ENCODE measurements at regions of chr17 and their contacts with region 1.

Region 1: DNA sequence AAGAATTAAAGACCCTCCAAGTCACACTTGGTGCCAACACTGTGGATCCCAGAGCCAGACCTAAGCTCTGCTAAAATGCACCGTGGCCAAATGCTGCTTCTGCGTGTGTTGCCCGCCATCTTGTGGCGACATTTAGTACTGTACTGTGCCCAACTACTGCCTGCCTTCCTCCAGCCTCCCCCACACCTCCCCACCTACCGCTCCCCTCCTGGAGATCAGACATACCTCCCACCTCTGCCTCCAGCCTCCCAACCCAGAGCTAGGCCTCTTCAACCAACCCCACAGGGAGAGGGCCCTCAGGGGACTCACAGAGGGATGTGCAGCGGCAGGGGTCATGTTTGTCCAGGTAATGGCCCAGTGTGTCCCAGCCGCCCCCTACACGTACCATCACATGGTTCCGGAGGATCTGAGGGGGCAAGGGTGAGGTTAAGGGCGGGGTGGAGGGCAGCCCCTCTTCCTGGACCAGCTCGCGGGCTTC is 5.5 kb downstream of the GAS2L2 start:
- DNase-seq: peak in 1 of 2 experiments; percentile 92
- H3K4me3 ChIP-seq: no peak overlapping the region
- H3K27ac ChIP-seq: no peak overlapping the region
- H3K4me1 ChIP-seq: peaks cover 0 to 11% (median 4%) of the 10 kb centered on the region in 4 experiments; a peak in 4 of 7 replicates
- H3K27me3 ChIP-seq: peaks cover 2 to 19% (median 15%) of the 10 kb centered on the region in 4 experiments
- CTCF ChIP-seq: peak; percentile 90 to 98 (median 95)
- EP300 ChIP-seq: no peak
- POLR2A ChIP-seq: no peak
- RAD21 ChIP-seq: peak; percentile 95 to 98

Region 2: GRCh38 chr17:35607239-35607847 is 140.2 kb before region 1 on chr17:
- CTCF ChIA-PET with region 1: interaction called, 166 read pairs
- POLR2A ChIA-PET with region 1: interaction called, 5 read pairs
- DNase-seq: no peak
- H3K4me3 ChIP-seq: no peak overlapping the region
- H3K27ac ChIP-seq: no peak overlapping the region
- H3K4me1 ChIP-seq: no peaks in the 10 kb centered on the region
- H3K27me3 ChIP-seq: no peaks in the 10 kb centered on the region
- CTCF ChIP-seq: no peak
- EP300 ChIP-seq: no peak
- POLR2A ChIP-seq: no peak
- RAD21 ChIP-seq: no peak

Region 3: DNA sequence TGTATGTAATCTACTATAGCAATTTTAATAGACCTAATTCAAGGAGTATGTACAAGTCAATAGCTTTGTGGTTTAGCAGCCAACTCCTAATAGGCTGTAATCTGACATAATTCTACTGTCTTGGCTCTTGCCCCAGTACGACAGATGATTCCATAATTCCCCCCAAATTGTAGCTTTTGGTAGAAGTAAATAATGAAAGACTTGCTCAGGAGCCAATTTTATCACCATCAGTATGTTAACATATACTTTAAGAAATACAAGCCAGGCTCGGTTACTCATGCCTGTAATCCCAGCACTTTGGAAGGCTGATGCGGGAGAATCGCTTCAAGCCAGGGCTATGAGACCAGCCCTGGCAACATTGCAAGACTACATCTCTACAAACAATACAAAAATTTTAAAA is 106.5 kb before region 1 on chr17:
- CTCF ChIA-PET with region 1: interaction called, 19 read pairs
- POLR2A ChIA-PET with region 1: no interaction called
- DNase-seq: no peak
- H3K4me3 ChIP-seq: no peak overlapping the region
- H3K27ac ChIP-seq: no peak overlapping the region
- H3K4me1 ChIP-seq: no peaks in the 10 kb centered on the region
- H3K27me3 ChIP-seq: no peaks in the 10 kb centered on the region
- CTCF ChIP-seq: no peak
- EP300 ChIP-seq: no peak
- POLR2A ChIP-seq: no peak
- RAD21 ChIP-seq: no peak

Region 4: GRCh38 chr17:35695613-35696012 is 52.0 kb before region 1 on chr17:
- CTCF ChIA-PET with region 1: interaction called, 10 read pairs
- POLR2A ChIA-PET with region 1: no interaction called
- DNase-seq: no peak
- H3K4me3 ChIP-seq: no peak overlapping the region
- H3K27ac ChIP-seq: no peak overlapping the region
- H3K4me1 ChIP-seq: no peaks in the 10 kb centered on the region
- H3K27me3 ChIP-seq: no peaks in the 10 kb centered on the region
- CTCF ChIP-seq: no peak
- EP300 ChIP-seq: no peak
- POLR2A ChIP-seq: no peak
- RAD21 ChIP-seq: no peak

Region 5: DNA sequence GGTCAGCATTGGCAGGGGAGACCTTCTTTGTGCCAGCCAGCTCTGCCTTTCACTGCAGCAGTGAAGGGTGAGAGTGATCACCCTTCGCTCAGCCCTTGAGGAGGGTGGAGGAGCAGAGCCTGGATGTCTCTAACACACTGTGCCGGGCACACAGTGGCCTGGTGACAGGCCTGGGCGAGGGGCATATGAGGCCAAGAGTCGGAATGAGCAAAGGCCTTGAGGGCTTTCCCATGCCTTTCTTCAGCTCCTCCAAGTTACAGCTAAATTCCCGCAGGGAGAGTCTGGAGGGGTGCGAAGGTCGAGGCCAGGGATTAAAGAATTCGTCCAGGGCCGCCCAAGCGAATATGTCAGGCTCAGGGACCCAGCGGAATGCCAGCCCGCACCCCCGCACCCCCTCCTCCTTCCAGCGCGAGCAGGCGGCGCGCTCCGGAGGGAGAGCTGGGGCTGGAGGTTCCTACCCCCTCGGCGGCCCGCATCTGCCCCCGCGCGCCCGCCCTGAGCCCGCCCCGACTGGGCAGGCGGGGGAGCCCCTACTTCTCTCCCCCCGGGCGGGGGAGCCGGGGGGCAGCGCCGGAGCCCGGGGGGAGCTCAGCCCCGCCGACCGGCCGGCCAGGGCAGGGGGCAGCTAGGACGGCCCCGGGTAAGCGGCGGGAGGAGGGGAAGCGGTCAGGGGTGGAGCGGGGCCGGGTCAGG is 16.2 kb before region 1 on chr17 and contains the start of gene RASL10B:
- CTCF ChIA-PET with region 1: interaction called, 28 read pairs
- POLR2A ChIA-PET with region 1: interaction called, 6 read pairs
- DNase-seq: peak in 1 of 2 experiments; percentile 85
- H3K4me3 ChIP-seq: peak within 1 kb of the TSS; percentile 67 to 85 (median 78)
- H3K27ac ChIP-seq: no peak within 1 kb of the TSS
- H3K4me1 ChIP-seq: peaks cover 7 to 26% (median 8%) of the 10 kb centered on the region in 4 experiments; a peak in 6 of 7 replicates
- H3K27me3 ChIP-seq: peaks cover 0 to 8% (median 5%) of the 10 kb centered on the region in 4 experiments; a peak in 4 of 7 replicates
- CTCF ChIP-seq: no peak
- EP300 ChIP-seq: no peak
- POLR2A ChIP-seq: no peak
- RAD21 ChIP-seq: no peak; a peak in 1 of 4 replicates
- total RNA-seq, gene RASL10B: 21.6 and 22.8 TPM in 2 replicates

Region 6: GRCh38 chr17:35774499-35774898 is 26.9 kb after region 1 on chr17:
- CTCF ChIA-PET with region 1: interaction called, 13 read pairs
- POLR2A ChIA-PET with region 1: no interaction called
- DNase-seq: no peak
- H3K4me3 ChIP-seq: no peak overlapping the region
- H3K27ac ChIP-seq: no peak overlapping the region
- H3K4me1 ChIP-seq: peaks cover 5 to 21% (median 6%) of the 10 kb centered on the region in 4 experiments
- H3K27me3 ChIP-seq: no peaks in the 10 kb centered on the region
- CTCF ChIP-seq: no peak
- EP300 ChIP-seq: no peak
- POLR2A ChIP-seq: no peak
- RAD21 ChIP-seq: no peak

Region 7: GRCh38 chr17:35969558-35970380 is 222.2 kb after region 1 on chr17:
- CTCF ChIA-PET with region 1: no interaction called
- POLR2A ChIA-PET with region 1: no interaction called
- DNase-seq: peak; percentile 60 to 87
- H3K4me3 ChIP-seq: no peak overlapping the region
- H3K27ac ChIP-seq: no peak overlapping the region
- H3K4me1 ChIP-seq: peaks cover 0 to 2% (median 0%) of the 10 kb centered on the region in 4 experiments; a peak in 2 of 7 replicates
- H3K27me3 ChIP-seq: no peaks in the 10 kb centered on the region
- CTCF ChIP-seq: peak; percentile 15 to 88 (median 81)
- EP300 ChIP-seq: no peak
- POLR2A ChIP-seq: no peak
- RAD21 ChIP-seq: peak; percentile 95